Prostate gland (tissue), 2 donors: ENCODE measurements at regions of chr1 and their contacts with region 1.

Region 1: DNA sequence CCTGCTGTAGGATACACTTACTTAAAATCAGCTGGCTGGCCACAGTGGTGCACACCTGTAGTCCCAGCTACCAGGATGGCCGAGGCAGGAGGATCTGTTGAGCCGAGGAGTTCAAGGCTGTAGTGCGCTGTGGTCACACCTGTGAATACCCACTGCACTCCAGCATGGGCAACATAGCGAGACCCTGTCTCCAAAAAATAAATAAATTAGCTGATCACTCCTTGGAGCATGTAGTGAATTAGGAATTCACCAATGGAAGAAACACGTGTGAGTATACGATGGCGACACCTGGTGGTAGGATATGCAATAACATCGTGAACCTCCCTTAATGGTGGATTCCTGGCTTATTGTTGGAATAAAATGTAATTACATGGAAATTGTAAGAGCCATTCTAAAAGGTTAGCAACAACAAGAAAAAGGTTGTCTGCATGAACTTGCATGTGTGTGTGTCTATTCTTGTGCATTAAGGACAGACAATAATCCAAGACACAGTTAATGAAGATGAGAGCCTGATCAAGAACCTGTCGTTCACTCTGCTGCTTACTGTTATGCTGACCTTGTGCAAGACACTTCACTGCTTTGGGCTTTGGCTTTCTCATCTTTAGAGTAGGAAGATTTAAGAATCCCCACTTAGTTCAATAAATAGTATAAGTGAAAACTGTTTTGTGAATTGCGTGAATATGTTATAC is 38.6 kb upstream of the COX20 start:
- DNase-seq: peak; percentile 51
- H3K4me3 ChIP-seq: no peak overlapping the region
- H3K27ac ChIP-seq: no peak overlapping the region
- H3K4me1 ChIP-seq: no peaks in the 10 kb centered on the region
- H3K27me3 ChIP-seq: no peaks in the 10 kb centered on the region
- CTCF ChIP-seq: peak; percentile 65 to 96 (median 84)
- POLR2A ChIP-seq: no peak

Region 2: DNA sequence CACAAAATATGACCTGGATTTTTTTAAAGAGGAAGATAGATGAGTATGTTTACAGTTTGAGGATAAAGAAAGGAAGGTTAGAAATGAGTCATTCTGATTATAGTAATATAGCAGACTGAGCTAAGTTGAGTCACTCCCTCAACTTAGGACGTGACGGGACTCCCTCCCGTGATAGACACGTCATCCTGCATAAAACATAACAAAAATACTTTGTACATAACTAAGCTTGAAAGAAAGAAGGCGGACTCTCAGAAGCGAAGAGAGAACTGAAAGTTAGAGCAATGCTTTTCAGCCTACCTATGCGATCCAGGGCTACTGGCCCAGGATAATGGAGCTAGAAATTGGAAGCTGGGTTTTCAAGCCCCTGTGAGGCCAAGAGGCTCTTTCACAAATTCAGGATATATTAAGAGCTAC is 196.9 kb before region 1 on chr1:
- intact Hi-C with region 1: loop called (anchors 1 kb)
- DNase-seq: no peak
- H3K4me3 ChIP-seq: no peak overlapping the region
- H3K27ac ChIP-seq: no peak overlapping the region
- H3K4me1 ChIP-seq: no peaks in the 10 kb centered on the region
- H3K27me3 ChIP-seq: no peaks in the 10 kb centered on the region
- CTCF ChIP-seq: no peak
- POLR2A ChIP-seq: peak; percentile 29

Region 3: GRCh38 chr1:244864253-244865027 is 67.6 kb after region 1 on chr1 and contains the start of gene HNRNPU:
- intact Hi-C with region 1: no loop called
- DNase-seq: peak; percentile 97
- H3K4me3 ChIP-seq: peak within 1 kb of the TSS; percentile 91 to 95
- H3K27ac ChIP-seq: peak within 1 kb of the TSS; percentile 100
- H3K4me1 ChIP-seq: peaks cover 4% of the 10 kb centered on the region
- H3K27me3 ChIP-seq: no peaks in the 10 kb centered on the region
- CTCF ChIP-seq: peak in 2 of 4 experiments; percentile 18 to 62
- POLR2A ChIP-seq: peak; percentile 100
- total RNA-seq, gene HNRNPU: 302 to 350 TPM